Activated T-helper 2 cell treated with anti-CD3 and anti-CD28 coated beads, Interferon-gamma antibody, Interleukin-2, Interleukin-4, amounts not matched to agents 10 μg/mL and 5 μg/mL and 100 μg/mL, durations not matched to agents 14 hours and 24 hours and 36 hours (primary cell): ENCODE measurements at regions of chr11 and their contacts with region 1.

Region 1: GRCh38 chr11:130894322-130895025 is 21.8 kb downstream of the SNX19 start:
- DNase-seq: peak; percentile 51
- H3K4me3 Mint-ChIP-seq: no peak overlapping the region
- H3K27ac Mint-ChIP-seq: no peak overlapping the region
- H3K4me1 Mint-ChIP-seq: peaks cover 4% of the 10 kb centered on the region
- H3K27me3 Mint-ChIP-seq: no peaks in the 10 kb centered on the region

Region 2: GRCh38 chr11:130861902-130862860 is 32.3 kb before region 1 on chr11:
- intact Hi-C with region 1: loop called (anchors 2 kb)
- DNase-seq: peak; percentile 79
- H3K4me3 Mint-ChIP-seq: no peak overlapping the region
- H3K27ac Mint-ChIP-seq: no peak overlapping the region
- H3K4me1 Mint-ChIP-seq: no peaks in the 10 kb centered on the region
- H3K27me3 Mint-ChIP-seq: peaks cover under 1% of the 10 kb centered on the region

Region 3: DNA sequence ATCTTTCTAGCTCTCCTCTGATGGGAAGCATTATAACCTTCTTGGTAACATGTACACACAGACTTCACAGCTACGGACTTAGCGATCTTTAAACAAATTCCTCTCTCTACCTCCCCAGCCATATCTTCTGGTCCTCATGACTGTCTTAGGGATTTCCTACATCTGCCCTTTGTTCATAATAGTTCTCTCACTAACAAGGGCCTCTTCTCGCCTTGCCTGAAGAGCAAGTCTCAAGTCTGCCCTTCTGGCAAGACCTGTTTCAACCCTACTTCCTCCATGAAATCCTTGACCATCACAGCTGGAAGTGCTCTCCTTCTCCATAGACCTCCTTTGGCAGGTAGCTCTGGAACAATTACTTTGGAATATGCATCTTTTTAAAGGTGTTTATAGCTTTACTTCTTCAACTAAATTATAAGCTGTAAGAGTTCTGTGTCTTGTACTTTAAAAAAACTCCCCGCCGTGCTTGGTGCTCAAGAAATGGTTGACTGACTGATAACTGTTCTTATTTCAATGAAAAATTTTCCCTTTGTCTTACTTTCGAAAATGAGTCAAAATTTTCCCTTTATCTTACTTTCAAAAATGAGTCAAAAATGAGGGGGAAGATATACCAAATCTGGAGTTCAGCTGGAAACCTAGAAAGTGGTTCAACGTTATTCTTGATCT is 12.9 kb before region 1 on chr11:
- intact Hi-C with region 1: loop called (anchors 1 kb)
- DNase-seq: no peak
- H3K4me3 Mint-ChIP-seq: no peak overlapping the region
- H3K27ac Mint-ChIP-seq: peak overlapping the region; percentile 90
- H3K4me1 Mint-ChIP-seq: peaks cover 16% of the 10 kb centered on the region
- H3K27me3 Mint-ChIP-seq: no peaks in the 10 kb centered on the region

Region 4: DNA sequence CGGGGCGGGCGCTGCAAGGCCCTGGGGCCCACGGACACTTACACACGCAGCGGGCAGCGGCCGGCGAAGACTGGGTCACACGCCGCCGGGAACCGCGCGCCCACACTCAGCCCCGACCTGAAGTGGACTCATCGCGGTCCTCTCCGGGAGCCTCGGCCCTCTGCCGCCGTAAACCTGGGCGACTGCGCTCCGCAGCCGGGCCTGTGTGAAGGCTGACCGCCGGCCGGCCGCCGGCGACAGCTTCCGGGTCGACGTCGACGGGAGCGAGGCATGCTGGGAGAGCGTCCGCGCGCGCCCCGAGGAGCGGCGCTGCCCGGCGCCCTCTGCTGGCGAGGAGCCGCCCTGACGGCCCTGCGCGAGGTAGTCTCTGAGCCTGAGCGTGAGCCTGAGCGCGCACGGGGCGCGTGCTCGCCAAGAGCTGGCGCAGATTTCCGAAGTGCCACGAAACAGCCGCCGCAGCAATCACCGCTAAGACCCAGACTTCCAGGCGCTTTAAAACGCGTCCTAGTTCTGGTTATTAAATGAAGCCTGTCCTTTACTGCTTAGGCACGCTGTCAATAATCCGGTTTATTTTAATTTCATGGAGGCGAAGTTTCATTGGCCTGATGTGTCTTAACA is 21.9 kb after region 1 on chr11 and contains the start of gene SNX19:
- intact Hi-C with region 1: loop called (anchors 2 kb)
- DNase-seq: peak; percentile 89
- H3K4me3 Mint-ChIP-seq: peak within 1 kb of the TSS; percentile 81
- H3K27ac Mint-ChIP-seq: peak within 1 kb of the TSS; percentile 63
- H3K4me1 Mint-ChIP-seq: peaks cover 32% of the 10 kb centered on the region
- H3K27me3 Mint-ChIP-seq: peaks cover 9% of the 10 kb centered on the region
- total RNA-seq, gene SNX19: 42.1 and 48.7 TPM in 2 replicates